Right ventricle myocardium superior (tissue), 1 donor: ENCODE measurements at regions of chr3 and their contacts with region 1.

Region 1: DNA sequence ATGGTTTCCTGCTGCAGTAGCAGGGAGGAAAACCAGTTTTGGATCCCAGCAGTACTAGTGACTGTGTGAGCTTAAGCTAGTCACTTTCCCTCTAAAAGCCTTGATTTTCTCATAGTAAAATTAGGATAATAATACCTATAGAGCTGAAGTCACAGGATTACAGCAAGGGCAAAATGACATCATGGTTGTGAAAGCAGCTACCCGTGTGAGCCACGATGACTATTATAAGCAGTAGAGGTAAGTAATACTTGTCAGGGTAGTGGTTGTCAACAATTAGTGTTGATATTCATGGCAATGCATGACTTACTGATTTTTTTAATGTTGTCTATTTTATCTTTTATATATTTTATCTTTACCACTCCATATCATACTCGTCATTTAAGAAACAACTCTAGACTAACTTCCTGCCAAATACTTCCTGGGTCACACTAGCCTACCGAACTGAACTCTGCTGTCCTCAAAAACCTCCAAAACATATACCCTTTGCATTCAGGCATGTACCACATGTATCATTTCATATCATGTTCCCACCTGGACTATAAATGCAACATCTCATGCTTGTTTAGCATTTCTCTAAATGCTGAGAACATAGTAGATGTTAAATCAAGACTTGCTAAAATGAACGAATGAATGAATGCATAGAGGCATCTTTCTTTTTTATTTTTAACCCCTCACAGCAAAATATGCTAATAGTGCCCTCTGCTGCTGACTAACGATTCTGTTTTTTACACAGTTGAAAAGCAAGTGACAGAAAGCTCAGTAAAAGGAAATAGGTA is 172.6 kb downstream of the P3H2 start:
- DNase-seq: no peak
- ATAC-seq: no peak

Region 2: GRCh38 chr3:189270248-189270832 is 677.8 kb before region 1 on chr3:
- intact Hi-C with region 1: loop called (anchors 5 kb)
- DNase-seq: peak; percentile 41
- ATAC-seq: peak; percentile 84

Region 3: DNA sequence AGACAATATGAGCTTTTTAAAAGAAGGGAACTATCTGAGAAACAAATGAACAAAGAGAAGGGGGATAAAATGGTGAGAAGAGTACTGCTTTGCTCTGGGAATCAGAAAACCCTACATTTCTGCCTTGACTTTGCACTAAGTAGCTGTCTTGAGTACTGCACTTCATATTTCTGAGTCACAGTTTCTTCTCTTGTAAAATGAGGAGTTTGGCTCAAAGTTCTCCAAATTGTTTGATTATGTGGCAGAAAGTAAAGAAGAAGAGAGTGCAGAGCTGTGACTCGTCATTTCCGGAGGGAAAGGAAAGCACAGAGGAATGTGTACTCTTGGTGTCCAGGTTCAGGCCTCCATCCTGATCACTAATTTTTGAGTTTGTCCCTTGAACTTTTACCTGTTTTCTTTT is 262.3 kb before region 1 on chr3:
- intact Hi-C with region 1: loop called (anchors 10 kb)
- DNase-seq: no peak
- ATAC-seq: no peak

Region 4: GRCh38 chr3:190017521-190018288 is 69.6 kb after region 1 on chr3:
- intact Hi-C with region 1: no loop called
- DNase-seq: no peak
- ATAC-seq: no peak